ENCODE measurements at regions of chr5 and their contacts with region 1.

Region 1: GRCh38 chr5:177071666-177072385 is 14.9 kb upstream of the FGFR4 start:
- DNase-seq: peak; percentile 76
- ATAC-seq: peak; percentile 91
- H3K4me3 Mint-ChIP-seq: peak overlapping the region; percentile 8
- H3K27ac Mint-ChIP-seq: peak overlapping the region; percentile 22
- H3K4me1 Mint-ChIP-seq: peaks cover 3% of the 10 kb centered on the region
- H3K27me3 Mint-ChIP-seq: no peaks in the 10 kb centered on the region; the same call in 1 of the 2 replicates
- CTCF ChIP-seq: peak; percentile 88

Region 2: DNA sequence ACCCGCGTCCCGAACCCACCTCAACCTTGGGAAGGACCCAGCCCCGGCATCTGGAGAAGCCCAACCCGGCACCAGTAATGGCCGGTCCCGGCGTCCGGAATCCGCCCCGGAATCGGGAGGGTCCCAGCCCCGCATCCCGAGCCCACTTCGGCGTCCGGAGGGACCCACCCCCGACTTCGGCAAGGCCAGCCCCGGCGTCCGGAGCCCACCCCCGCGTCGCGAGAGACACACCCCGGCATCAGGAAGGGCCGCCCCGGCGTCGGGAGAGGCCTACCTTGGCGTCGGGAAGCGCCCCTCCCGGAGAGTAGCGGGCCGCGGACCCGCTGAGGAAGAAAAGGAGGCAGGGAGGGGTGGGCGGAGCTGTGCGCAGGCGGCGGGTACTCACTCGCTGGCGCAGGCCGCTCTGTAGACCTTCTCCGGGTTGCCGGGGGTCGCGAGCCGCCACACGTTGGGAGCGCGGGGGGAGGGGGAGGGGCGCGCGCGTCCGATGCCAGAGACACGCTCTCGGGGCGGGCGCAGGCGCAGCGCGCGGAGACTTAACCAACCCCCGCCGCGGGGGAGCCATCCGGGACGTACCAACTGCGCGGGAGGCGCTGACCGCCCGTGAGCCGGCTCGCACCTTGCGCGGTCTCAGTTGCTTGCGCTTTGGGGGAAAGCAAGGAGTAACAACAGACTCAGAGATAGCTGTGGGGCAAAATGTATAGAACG is 65.4 kb before region 1 on chr5 and contains the start of gene UIMC1:
- CTCF ChIA-PET with region 1: interaction called, 10 read pairs
- POLR2A ChIA-PET with region 1: no interaction called
- DNase-seq: peak; percentile 94
- ATAC-seq: peak; percentile 86
- H3K4me3 Mint-ChIP-seq: peak within 1 kb of the TSS; percentile 94
- H3K27ac Mint-ChIP-seq: peak within 1 kb of the TSS; percentile 89
- H3K4me1 Mint-ChIP-seq: peaks cover 26% of the 10 kb centered on the region
- H3K27me3 Mint-ChIP-seq: peaks cover 5% of the 10 kb centered on the region; the same call in 1 of the 2 replicates
- CTCF ChIP-seq: no peak
- total RNA-seq, gene UIMC1: 44.4 to 48.0 TPM (median 46.1 TPM) in 3 replicates

Region 3: GRCh38 chr5:177098470-177099141 is 26.8 kb after region 1 on chr5:
- CTCF ChIA-PET with region 1: interaction called, 12 read pairs
- POLR2A ChIA-PET with region 1: no interaction called
- DNase-seq: no peak
- ATAC-seq: no peak; the same call in 1 of the 2 replicates
- H3K4me3 Mint-ChIP-seq: no peak overlapping the region
- H3K27ac Mint-ChIP-seq: peak overlapping the region; percentile 70
- H3K4me1 Mint-ChIP-seq: peaks cover 21% of the 10 kb centered on the region
- H3K27me3 Mint-ChIP-seq: no peaks in the 10 kb centered on the region; the same call in 1 of the 2 replicates
- CTCF ChIP-seq: no peak

Region 4: DNA sequence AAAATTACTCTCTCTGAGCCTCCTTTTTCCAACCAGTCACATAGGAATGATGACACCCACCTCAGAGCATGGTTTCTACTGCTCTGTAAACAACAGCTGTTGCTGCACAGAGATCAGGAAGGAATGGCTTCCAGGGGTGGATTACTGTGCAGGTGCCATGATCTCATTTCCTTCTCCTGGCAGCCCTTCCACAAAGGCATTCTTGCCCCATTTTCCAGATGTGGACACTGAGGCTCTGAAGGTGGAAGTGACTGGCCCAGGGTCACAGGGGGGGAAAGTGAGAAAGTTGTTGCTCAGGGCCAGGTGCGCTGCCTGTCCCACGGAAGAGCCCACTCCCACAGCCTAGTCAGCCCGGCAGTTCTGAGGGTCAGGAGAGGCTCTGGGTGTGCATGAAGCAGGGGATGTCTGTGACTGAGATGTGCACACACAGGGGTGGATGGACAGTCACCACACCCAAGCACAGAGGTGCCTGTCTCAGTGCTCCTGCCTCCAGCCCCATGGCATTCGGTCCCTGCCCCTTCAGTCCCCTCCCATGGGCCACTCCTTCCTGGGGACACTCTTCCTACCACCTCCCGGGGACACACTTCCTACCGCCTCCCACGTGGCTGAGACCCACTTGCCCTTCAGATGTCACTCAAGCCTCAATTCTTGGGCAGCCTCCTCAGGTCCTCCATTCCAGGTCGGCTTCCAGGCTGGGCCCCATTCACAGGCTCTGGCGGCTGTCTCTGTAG is 31.9 kb after region 1 on chr5:
- CTCF ChIA-PET with region 1: interaction called, 156 read pairs
- POLR2A ChIA-PET with region 1: no interaction called
- DNase-seq: no peak
- ATAC-seq: no peak
- H3K4me3 Mint-ChIP-seq: no peak overlapping the region
- H3K27ac Mint-ChIP-seq: no peak overlapping the region; the same call in 1 of the 2 replicates
- H3K4me1 Mint-ChIP-seq: peaks cover 23% of the 10 kb centered on the region
- H3K27me3 Mint-ChIP-seq: no peaks in the 10 kb centered on the region; the same call in 1 of the 2 replicates
- CTCF ChIP-seq: no peak

Measured in WTC11 (cell line).